Right ventricle myocardium inferior (tissue), 1 donor: ENCODE measurements at regions of chr1 and their contacts with region 1.

Region 1: GRCh38 chr1:115469703-115470476 is 131.8 kb upstream of the NGF start:
- DNase-seq: no peak
- ATAC-seq: peak; percentile 63

Region 2: GRCh38 chr1:115275212-115275611 is 194.7 kb before region 1 on chr1:
- intact Hi-C with region 1: loop called (anchors 10 kb)
- DNase-seq: no peak
- ATAC-seq: no peak